Activated CD4-positive, alpha-beta T cell treated with anti-CD3 and anti-CD28 coated beads for 36 hours (primary cell): ENCODE measurements at regions of chr11 and their contacts with region 1.

Region 1: GRCh38 chr11:87110443-87111131 is 72.9 kb downstream of the TMEM135 start:
- DNase-seq: no peak
- ATAC-seq: peak; percentile 42
- H3K4me3 Mint-ChIP-seq: no peak overlapping the region
- H3K27ac Mint-ChIP-seq: no peak overlapping the region
- H3K4me1 Mint-ChIP-seq: peaks cover 4% of the 10 kb centered on the region
- H3K27me3 Mint-ChIP-seq: no peaks in the 10 kb centered on the region

Region 2: GRCh38 chr11:87097582-87097981 is 13.0 kb before region 1 on chr11:
- CTCF ChIA-PET with region 1: interaction called, 20 read pairs
- POLR2A ChIA-PET with region 1: no interaction called
- intact Hi-C with region 1: no loop called
- DNase-seq: peak; percentile 61
- ATAC-seq: peak; percentile 89
- H3K4me3 Mint-ChIP-seq: no peak overlapping the region
- H3K27ac Mint-ChIP-seq: no peak overlapping the region
- H3K4me1 Mint-ChIP-seq: peaks cover 8% of the 10 kb centered on the region
- H3K27me3 Mint-ChIP-seq: no peaks in the 10 kb centered on the region

Region 3: GRCh38 chr11:87148749-87149148 is 38.2 kb after region 1 on chr11:
- CTCF ChIA-PET with region 1: no interaction called
- POLR2A ChIA-PET with region 1: interaction called, 13 read pairs
- intact Hi-C with region 1: no loop called
- DNase-seq: no peak
- ATAC-seq: no peak
- H3K4me3 Mint-ChIP-seq: no peak overlapping the region
- H3K27ac Mint-ChIP-seq: no peak overlapping the region
- H3K4me1 Mint-ChIP-seq: peaks cover 17% of the 10 kb centered on the region
- H3K27me3 Mint-ChIP-seq: no peaks in the 10 kb centered on the region